ENCODE measurements at regions of chr17 and their contacts with region 1.

Region 1: DNA sequence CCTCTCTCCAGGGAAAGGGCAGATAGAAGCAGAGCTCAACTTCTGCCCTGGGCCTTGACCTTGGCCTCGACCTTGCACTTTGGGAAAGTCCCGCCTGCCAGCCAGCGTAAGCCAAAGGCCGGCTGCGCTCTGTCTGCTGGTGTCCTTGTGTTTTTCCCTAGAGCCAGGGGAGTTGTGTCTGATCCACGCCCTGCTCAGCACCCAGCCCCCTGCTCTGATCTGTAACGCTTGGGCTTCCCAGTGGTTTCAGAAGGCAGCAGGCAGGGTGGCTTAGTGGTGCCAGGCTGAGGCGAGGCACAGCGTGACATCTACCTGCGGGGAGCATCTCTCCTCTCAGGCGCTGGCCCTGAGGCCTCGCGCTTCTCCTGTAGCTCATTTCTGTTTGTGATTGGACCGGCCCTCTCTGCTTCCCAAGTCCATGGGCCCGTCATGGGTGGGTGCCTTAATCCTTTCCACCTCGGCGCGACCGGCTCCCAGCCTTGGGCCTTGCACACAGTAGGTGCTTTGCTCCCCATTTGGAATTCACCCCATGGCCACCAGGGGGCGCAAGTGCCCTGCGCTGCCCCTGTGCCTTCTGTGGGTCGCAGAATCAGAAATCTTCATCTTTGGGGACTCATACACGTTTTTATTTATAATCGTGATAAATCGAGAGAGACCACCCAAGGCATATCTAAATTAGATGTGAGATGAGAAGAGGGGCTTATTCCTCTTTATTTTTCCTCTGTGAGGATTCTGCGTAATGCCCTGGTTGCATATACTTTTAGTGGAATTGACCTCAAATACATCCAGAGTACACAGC is 24.2 kb downstream of the SGSH start:
- H3K4me3 ChIP-seq: no peak overlapping the region
- H3K27ac ChIP-seq: no peak overlapping the region
- H3K4me1 ChIP-seq: no peaks in the 10 kb centered on the region
- CTCF ChIP-seq: peak; percentile 76

Region 2: DNA sequence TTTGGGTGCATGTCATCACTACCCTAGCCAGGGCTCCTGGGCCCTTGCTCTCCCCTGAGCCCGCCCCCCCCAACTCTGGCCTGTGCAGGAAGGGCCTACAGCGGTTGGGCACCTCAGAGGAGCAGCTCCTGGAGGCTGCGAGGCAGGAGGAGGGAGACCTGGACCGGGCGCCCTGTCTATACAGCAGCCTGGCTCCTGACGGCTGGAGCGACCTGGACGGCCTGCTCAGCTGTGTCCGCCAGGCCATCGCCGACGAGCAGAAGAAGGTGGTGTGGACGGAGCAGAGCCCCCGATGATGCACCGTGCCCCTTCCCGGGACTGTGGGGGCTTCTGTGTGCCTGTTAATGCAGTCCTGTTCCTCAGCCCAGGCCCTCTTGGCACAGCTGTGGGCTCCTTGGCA is 12.1 kb after region 1 on chr17:
- CTCF ChIA-PET with region 1: interaction called, 20 read pairs
- POLR2A ChIA-PET with region 1: no interaction called
- H3K4me3 ChIP-seq: no peak overlapping the region
- H3K27ac ChIP-seq: no peak overlapping the region
- H3K4me1 ChIP-seq: no peaks in the 10 kb centered on the region
- CTCF ChIP-seq: no peak

Region 3: DNA sequence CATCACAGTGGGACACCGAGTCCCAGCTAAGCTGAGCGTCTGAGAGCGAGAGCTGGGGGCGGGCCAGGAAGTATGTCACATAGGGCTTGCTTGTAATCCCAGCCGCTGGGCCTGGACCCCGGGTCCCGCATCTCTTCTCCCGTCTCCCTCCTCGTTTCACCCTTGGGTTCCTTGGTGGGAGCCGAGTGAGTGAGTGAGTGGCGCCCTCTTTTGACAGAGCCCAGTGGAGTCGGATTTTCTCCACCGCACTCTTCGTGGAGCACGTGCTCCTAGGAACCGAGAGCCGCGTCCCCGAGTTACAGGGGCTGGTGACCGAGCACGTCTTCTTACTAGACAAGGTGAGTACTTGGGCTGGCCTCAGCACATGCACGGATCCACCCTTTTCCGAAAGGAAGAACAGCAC is 168.3 kb after region 1 on chr17:
- CTCF ChIA-PET with region 1: interaction called, 48 read pairs
- POLR2A ChIA-PET with region 1: no interaction called
- H3K4me3 ChIP-seq: no peak overlapping the region
- H3K27ac ChIP-seq: no peak overlapping the region
- H3K4me1 ChIP-seq: no peaks in the 10 kb centered on the region
- CTCF ChIP-seq: no peak